KBM-7 (cell line): ENCODE measurements at regions of chr6 and their contacts with region 1.

Region 1: DNA sequence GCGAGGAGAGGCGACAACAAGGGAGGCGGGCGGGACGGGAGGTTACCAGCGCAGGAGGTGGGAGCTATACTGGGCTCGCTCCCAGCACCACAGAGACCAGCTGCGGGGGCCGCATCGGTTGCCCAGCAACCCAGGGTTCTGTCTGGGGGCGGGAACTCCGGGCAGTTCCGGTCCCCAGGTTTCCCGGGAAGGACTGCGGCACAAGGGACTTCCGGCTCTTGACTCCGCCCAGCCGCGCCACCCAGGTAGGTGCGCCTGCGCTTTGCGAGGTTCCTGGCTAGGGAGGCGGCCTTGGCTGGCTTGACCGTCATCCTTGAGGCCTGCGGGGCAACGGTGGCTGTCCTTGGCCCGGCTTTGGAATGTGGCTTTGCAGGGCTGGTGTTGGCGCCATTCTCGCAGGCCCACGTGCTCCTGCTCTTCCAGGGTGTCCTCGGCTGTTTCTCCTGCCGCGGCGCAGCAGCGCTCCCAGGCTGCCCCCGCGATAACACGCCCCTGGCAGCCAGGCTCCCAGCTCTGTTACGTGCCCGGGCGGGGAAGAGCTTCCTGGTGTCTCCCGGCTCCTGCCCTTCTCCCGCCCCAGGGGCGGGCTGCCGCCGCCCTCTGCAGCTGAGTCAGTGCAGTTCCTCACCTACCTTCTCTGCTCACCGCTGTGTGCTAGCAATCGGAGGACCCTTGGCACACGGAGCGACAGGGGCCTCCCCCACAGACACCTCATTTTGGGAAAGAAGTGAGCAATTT is at the start of gene RSPH3:
- DNase-seq: peak; percentile 96

Region 2: GRCh38 chr6:158213925-158214674 is 785.7 kb before region 1 on chr6:
- in situ Hi-C with region 1: loop called (anchors 25 kb)
- DNase-seq: peak; percentile 85

Region 3: GRCh38 chr6:158653577-158654354 is 346.1 kb before region 1 on chr6:
- in situ Hi-C with region 1: no loop called
- DNase-seq: peak; percentile 87

Region 4: GRCh38 chr6:158686791-158687381 is 312.9 kb before region 1 on chr6:
- in situ Hi-C with region 1: no loop called
- DNase-seq: peak; percentile 73

Region 5: DNA sequence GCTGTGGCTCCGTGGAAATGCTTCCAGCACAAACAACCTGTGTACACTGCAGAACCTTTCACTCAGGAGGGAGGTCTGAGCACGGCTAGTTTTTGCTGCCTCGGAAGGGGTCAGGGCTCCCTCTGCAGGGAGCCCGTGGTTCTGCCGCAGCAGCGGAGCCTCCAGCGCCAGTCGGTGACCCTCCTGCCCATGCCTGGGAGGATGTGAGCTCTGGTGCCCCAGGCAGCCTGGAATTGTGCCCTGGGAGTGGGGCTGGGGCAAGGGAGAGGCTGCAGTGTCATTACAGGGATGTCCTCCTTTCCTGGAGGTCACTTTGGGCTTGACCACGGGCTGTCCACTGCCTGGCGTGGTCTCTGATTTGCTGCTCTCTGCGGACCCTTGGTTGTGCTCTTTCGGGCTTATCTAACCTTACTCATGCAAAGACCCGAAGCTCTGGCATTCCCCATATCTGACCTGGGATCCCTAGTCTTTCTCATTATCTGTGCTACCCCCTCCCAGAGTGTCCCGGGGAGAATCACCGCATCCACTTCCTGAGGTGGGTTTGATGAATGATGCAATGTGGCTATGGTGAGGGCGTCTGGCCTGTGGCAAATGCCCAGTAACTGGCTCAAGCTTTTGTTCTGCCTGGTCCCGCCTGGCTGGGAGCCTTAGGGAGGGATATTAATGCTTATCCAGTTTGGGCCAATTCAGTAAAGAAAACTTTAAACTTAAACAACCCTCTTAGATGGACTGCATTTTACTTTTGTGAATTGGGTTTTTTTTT is 104.5 kb after region 1 on chr6:
- in situ Hi-C with region 1: loop called (anchors 25 kb)
- DNase-seq: peak; percentile 81